ENCODE measurements at regions of chr7 and their contacts with region 1.

Region 1: DNA sequence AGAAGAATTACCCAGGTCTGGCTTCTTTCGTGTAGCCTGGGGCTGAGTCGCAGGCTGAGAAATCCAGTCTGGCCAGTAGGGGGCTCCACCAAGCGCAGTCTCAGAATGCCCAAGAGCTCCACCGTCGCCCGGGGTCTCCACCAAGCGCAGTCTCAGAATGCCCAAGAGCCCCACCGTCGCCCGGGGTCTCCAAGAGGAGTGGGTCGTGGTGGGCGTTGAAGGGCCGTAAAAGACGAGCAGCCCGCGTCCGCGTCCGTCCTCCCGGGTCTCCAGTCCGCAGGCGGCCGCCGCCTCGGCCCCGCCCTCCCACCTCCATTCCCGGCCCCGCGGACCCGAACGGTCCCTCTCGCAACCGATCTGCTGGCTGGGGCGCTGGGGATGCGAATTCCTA is 895 bp upstream of the ZYX start:
- DNase-seq: peak; percentile 67 to 94
- H3K4me3 ChIP-seq: peak overlapping the region; percentile 89 to 97
- H3K27ac ChIP-seq: peak overlapping the region; percentile 97 to 99
- H3K4me1 ChIP-seq: peaks cover 5 to 24% of the 10 kb centered on the region in 2 donors
- H3K27me3 ChIP-seq: no peaks in the 10 kb centered on the region
- CTCF ChIP-seq: peak; percentile 79 to 90 (median 88)

Region 2: DNA sequence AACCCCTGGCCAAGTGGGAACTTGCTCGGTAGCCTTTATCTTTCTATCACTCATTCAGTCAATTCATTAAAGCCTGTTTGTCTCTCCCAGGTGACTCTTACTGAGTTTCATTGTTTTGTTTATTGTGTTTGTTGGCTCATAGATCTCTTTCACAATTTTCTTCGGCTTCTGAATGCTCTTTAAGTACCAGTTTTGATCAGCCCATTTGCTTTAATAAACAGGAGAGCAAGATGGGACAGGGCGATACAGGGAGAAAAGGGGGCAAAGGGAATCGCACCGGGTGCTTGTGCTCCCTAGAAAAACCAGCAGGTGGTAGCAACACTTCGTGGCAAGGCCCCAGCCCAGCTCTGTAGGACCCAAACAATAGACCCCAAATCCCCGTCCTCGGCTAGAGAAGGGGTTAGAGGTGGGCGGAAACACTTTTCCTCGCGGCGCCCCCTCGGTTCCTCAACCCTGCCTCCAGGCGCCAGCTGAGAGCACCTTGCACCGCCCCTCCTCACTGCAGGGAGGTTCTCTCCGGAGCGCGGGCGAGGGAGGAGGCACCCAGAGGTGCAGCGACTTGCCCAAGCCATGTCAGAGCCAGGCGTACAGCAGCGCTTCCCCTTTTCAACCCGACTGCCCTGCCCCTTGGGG is 526.4 kb before region 1 on chr7:
- intact Hi-C with region 1: loop called (anchors 10 kb)
- DNase-seq: peak in 1 of 2 donors; percentile 74
- H3K4me3 ChIP-seq: peak overlapping the region; percentile 77 to 78
- H3K27ac ChIP-seq: peak overlapping the region; percentile 42 to 80
- H3K4me1 ChIP-seq: peaks cover 0 to 8% of the 10 kb centered on the region in 2 donors
- H3K27me3 ChIP-seq: no peaks in the 10 kb centered on the region
- CTCF ChIP-seq: peak; percentile 64 to 83 (median 83)

Region 3: DNA sequence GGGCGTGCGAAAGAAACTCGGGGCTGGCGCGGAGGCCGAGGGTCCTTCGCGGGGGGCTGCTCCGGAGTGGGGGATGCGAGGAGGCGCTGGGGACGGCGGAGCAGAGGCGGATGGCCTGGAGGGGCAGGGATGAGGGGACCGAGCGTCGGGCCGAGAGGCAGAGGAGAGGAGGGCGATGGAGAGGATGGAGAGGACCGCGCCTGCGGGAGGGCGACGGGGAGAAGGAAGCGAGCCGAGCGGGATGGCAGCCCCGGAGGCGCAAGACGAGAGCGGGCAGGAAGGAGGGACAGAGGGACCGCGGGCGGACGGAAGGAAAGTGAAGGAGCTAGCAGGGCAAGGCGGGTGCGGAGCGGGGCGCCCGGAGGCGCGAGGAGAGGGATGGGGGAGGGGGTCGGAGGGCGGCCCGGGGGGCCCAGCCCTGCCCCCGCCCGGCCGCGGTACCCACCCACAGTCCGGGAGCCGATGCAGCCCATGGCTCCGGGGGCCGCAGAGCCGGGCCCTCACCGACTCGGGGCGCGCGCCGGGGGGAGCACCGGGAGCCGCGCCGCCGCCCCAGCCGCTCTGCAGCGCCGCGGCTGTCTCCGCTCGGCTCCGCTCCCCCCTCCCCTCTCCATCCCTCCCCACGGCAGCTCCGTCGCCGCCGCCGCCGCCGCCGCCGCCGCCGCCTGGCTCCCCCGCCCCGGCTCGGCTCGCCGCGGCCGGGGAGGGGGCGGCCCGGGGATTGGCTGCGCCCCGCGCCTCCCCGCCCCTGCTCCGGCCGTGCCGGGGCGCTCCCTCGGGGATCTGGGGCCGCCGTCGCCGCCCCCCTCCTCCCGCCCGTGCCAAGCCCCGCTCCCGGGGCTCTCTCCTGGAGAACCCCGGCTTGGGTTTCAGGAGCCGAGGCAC is 17.9 kb before region 1 on chr7 and contains the start of gene FAM131B:
- intact Hi-C with region 1: loop called (anchors 1 kb)
- DNase-seq: no peak
- H3K4me3 ChIP-seq: peak within 1 kb of the TSS; percentile 69 to 79
- H3K27ac ChIP-seq: no peak within 1 kb of the TSS
- H3K4me1 ChIP-seq: peaks cover 0 to 8% of the 10 kb centered on the region in 2 donors
- H3K27me3 ChIP-seq: no peaks in the 10 kb centered on the region
- CTCF ChIP-seq: no peak
- total RNA-seq, gene FAM131B: 0.53 TPM

Region 4: DNA sequence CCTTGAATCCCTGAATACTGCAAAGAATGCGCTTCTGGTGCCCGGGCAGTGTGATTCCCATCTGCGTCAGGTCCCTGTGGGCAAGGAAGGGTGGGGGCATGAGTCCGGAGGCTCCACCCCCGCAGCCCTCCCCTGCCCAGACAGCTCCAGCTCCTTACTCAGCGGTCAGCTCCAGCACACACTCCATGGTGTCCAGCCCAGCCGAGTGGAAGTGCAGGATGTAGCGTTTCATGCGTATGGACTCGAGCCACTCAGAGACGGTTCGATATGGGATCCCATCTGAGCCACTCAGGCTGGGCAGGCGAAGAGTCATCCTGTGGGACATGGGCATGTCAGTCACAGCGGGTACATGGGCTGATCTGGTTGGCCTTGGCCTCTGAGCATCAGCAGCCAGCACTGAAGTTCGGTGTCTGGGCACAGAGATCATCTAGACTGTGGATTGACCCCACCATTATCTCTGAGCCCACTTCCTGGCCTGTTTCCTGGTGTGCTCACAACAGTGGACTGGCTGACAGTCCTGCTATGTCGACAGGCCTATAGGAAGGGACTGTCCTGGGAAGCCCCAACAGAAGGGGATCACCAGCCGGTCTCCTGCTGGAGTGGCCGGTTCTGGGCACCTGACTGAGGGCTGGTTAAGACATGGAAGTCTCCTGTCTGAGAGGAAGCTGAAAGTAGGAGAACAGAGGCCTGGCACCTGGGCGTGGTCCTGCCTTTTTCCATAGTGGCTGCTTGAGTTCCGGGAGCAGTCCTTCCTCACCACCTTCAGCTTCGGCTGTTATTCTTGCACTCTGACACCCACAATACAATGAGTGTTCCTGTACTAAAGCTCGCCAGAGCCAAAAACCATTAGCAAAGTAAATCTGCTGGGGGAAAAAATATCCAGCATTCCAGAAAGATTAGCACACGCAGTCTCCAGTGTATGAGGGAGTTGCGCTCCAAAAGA is 11.5 kb after region 1 on chr7:
- intact Hi-C with region 1: loop called (anchors 1 kb)
- DNase-seq: peak; percentile 66 to 96
- H3K4me3 ChIP-seq: peak overlapping the region; percentile 1 to 42
- H3K27ac ChIP-seq: peak overlapping the region; percentile 97 to 99
- H3K4me1 ChIP-seq: peaks cover 35 to 73% of the 10 kb centered on the region in 2 donors
- H3K27me3 ChIP-seq: no peaks in the 10 kb centered on the region
- CTCF ChIP-seq: no peak

Region 5: GRCh38 chr7:143416565-143417149 is 36.4 kb after region 1 on chr7:
- intact Hi-C with region 1: loop called (anchors 1 kb)
- DNase-seq: no peak
- H3K4me3 ChIP-seq: no peak overlapping the region
- H3K27ac ChIP-seq: no peak overlapping the region
- H3K4me1 ChIP-seq: peaks cover 3 to 4% of the 10 kb centered on the region in 2 donors
- H3K27me3 ChIP-seq: no peaks in the 10 kb centered on the region
- CTCF ChIP-seq: peak; percentile 65 to 81 (median 73)

Region 6: GRCh38 chr7:143901668-143902331 is 521.5 kb after region 1 on chr7 and contains the start of gene TCAF1:
- intact Hi-C with region 1: loop called (anchors 2 kb)
- DNase-seq: peak; percentile 79 to 97
- H3K4me3 ChIP-seq: peak within 1 kb of the TSS; percentile 70 to 78
- H3K27ac ChIP-seq: peak within 1 kb of the TSS; percentile 79 to 84
- H3K4me1 ChIP-seq: peaks cover 0 to 3% of the 10 kb centered on the region in 2 donors
- H3K27me3 ChIP-seq: no peaks in the 10 kb centered on the region
- CTCF ChIP-seq: peak in 2 of 3 experiments; percentile 40 to 43
- total RNA-seq, gene TCAF1: 30.9 TPM

Measured in ascending aorta (tissue), 2 donors.